ENCODE measurements at regions of chr2 and their contacts with region 1.

Region 1: GRCh38 chr2:95314964-95315611 is 17.9 kb downstream of the KCNIP3 start:
- DNase-seq: peak; percentile 70
- H3K4me3 ChIP-seq: no peak overlapping the region
- H3K27ac ChIP-seq: peak overlapping the region; percentile 88
- H3K4me1 ChIP-seq: peaks cover 78% of the 10 kb centered on the region
- H3K27me3 ChIP-seq: no peaks in the 10 kb centered on the region
- CTCF ChIP-seq: peak; percentile 94

Region 2: GRCh38 chr2:95115418-95115817 is 199.7 kb before region 1 on chr2:
- CTCF ChIA-PET with region 1: no interaction called
- POLR2A ChIA-PET with region 1: no interaction called
- intact Hi-C with region 1: no loop called
- DNase-seq: peak; percentile 69 to 77
- H3K4me3 ChIP-seq: no peak overlapping the region
- H3K27ac ChIP-seq: no peak overlapping the region
- H3K4me1 ChIP-seq: peaks cover 10% of the 10 kb centered on the region; the same call in 1 of the 2 replicates
- H3K27me3 ChIP-seq: no peaks in the 10 kb centered on the region
- CTCF ChIP-seq: peak; percentile 94

Region 3: DNA sequence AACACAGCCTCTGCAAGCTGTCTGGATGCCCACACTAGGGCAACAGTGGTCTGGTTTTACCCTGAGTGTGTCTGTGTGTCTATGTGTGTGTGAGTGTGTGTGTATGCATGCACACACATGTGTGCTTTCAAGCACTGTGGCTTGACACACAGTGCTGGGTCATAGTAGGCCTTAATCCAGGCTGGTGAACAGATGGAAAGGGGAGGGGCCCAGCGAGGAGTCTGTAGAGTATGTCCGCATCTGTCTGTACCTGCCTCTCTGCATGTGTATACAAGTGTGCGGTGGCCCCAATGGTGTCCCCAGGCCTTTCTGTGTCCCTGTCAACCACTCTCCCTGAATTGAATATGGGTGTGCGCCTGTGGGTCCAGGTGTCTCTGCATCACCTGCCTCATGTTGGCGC is 27.3 kb before region 1 on chr2:
- CTCF ChIA-PET with region 1: interaction called, 12 read pairs
- POLR2A ChIA-PET with region 1: no interaction called
- intact Hi-C with region 1: no loop called
- DNase-seq: no peak
- H3K4me3 ChIP-seq: no peak overlapping the region
- H3K27ac ChIP-seq: no peak overlapping the region
- H3K4me1 ChIP-seq: peaks cover 19% of the 10 kb centered on the region
- H3K27me3 ChIP-seq: no peaks in the 10 kb centered on the region
- CTCF ChIP-seq: no peak

Region 4: DNA sequence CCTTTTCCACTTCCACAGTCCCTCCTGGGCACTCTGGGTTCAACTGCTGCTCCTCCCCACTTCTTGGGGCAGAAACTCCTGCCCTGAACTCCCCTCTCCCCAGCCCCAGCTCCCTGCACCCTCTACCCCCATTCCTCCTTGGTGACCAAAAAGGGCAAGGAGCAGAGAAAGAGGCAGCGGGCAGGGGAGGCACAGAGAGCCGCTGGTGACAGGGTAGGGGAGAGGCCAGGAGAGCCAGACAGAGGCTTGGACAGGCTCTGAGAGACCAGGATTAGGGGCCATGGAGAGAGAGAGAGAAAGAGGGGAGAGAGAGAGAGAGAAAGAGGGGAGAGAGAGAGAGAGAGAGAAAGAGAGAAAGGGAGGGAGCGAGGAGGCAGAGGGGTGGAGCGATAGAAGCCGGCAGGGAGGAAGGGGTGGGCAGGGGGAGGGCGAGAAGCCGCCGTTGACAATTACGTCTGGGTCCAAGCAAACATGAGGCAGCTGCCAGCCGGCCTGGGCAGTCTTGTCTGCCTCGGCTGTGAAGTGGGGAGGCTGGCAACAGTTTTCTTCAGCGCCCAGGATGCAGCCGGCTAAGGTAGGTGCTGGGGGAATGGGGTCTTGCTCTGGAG is 18.1 kb before region 1 on chr2 and contains the start of gene KCNIP3:
- CTCF ChIA-PET with region 1: no interaction called
- POLR2A ChIA-PET with region 1: interaction called, 11 read pairs
- intact Hi-C with region 1: loop called (anchors 2 kb)
- DNase-seq: no peak
- H3K4me3 ChIP-seq: no peak within 1 kb of the TSS
- H3K27ac ChIP-seq: no peak within 1 kb of the TSS
- H3K4me1 ChIP-seq: peaks cover 34% of the 10 kb centered on the region
- H3K27me3 ChIP-seq: peaks cover 3% of the 10 kb centered on the region; the same call in 1 of the 2 replicates
- CTCF ChIP-seq: no peak
- total RNA-seq, gene KCNIP3: 3.5 and 4.5 TPM in 2 replicates

Region 5: GRCh38 chr2:95329891-95330780 is 15.0 kb after region 1 on chr2:
- CTCF ChIA-PET with region 1: no interaction called
- POLR2A ChIA-PET with region 1: no interaction called
- intact Hi-C with region 1: no loop called
- DNase-seq: no peak
- H3K4me3 ChIP-seq: no peak overlapping the region
- H3K27ac ChIP-seq: no peak overlapping the region
- H3K4me1 ChIP-seq: no peaks in the 10 kb centered on the region
- H3K27me3 ChIP-seq: no peaks in the 10 kb centered on the region
- CTCF ChIP-seq: no peak

Region 6: GRCh38 chr2:95359031-95359430 is 43.9 kb after region 1 on chr2:
- CTCF ChIA-PET with region 1: no interaction called
- POLR2A ChIA-PET with region 1: no interaction called
- intact Hi-C with region 1: no loop called
- DNase-seq: peak in 1 of 2 experiments; percentile 63
- H3K4me3 ChIP-seq: no peak overlapping the region
- H3K27ac ChIP-seq: no peak overlapping the region
- H3K4me1 ChIP-seq: no peaks in the 10 kb centered on the region
- H3K27me3 ChIP-seq: peaks cover 82% of the 10 kb centered on the region
- CTCF ChIP-seq: no peak

Region 7: DNA sequence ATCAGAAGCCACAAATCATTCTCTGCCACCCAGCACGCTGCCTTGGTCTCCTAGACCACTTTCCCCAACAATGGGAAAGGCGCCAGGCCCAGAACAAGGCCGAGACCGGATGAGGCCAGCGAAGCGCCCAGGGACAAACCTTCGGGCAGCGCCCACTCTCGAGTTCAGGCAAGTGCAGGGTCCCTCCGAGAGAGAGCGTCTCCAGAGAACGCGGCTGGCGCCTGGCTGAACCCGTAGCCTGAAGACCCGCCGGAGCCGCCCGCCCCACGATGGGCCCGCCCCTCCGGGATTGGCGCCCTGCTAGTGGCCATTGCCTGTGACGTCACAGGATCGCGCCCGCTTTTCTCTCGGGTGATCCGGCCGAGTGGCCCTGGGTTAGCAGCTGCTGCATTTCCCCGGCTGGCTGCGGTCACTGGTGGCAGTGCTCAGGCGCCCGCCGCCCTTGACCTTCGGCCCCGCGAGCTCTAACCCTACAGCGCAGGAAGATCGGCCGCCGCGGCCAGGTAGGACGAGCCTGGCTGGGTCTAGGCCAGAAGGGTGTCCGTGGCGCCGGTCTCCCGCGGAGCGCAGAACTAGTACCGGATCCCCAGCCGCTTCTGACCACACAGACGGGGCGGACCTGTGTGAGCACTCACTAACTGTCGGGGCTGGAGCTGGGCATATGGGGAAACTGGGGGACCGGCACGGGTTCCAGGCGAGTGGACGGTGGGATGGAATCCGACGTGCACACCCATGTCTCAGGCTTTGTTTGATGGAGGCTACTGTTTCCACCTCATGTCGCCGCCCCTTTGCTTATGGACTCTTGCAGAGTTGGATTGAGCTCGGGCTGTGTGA is 87.5 kb after region 1 on chr2 and contains the start of gene FAHD2A:
- CTCF ChIA-PET with region 1: no interaction called
- POLR2A ChIA-PET with region 1: no interaction called
- intact Hi-C with region 1: loop called (anchors 2 kb)
- DNase-seq: peak; percentile 85 to 94
- H3K4me3 ChIP-seq: peak within 1 kb of the TSS; percentile 92
- H3K27ac ChIP-seq: no peak within 1 kb of the TSS
- H3K4me1 ChIP-seq: peaks cover 17% of the 10 kb centered on the region
- H3K27me3 ChIP-seq: no peaks in the 10 kb centered on the region
- CTCF ChIP-seq: no peak
- total RNA-seq, gene FAHD2A: 23.0 and 28.7 TPM in 2 replicates